Endothelial cell of umbilical vein (primary cell): ENCODE measurements at regions of chr3 and their contacts with region 1.

Region 1: DNA sequence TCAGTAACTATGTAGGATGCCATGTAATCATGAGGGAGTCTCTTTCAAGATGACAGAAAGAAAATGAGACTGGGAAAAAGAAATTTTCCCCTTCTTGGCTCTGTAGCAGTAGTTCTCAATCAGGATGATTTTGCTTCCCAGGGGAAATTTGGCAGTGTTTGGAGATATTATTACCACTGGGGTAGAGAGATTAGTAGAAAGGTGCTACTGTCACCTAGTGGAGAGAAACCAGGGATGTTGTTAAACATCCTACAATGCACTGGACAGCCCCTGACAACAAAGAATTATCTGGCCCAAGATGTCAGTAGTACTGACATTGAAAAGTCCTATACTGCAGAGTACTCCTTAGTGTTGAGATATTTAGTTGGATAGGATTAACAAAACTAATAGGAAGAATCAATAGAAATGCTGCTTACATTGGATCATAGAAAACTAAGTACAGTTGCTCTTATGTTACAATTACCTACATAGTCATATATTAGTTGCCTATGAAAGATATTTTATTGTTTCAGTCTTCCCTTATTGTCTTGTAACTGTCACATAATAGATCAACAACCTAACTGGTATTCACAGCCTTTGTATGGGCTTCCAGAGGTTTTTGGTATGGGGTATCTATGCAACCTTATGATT is 433.3 kb downstream of the RAP2B start:
- DNase-seq: peak; percentile 66
- H3K4me3 ChIP-seq: no peak overlapping the region
- H3K27ac ChIP-seq: no peak overlapping the region
- H3K4me1 ChIP-seq: peaks cover 15% of the 10 kb centered on the region
- H3K27me3 ChIP-seq: no peaks in the 10 kb centered on the region
- CTCF ChIP-seq: peak; percentile 35 to 62
- POLR2A ChIP-seq: no peak

Region 2: GRCh38 chr3:153291056-153291685 is 304.1 kb before region 1 on chr3:
- CTCF ChIA-PET with region 1: interaction called, 4 read pairs
- POLR2A ChIA-PET with region 1: no interaction called
- dilution Hi-C with region 1: no loop called
- intact Hi-C with region 1: loop called (anchors 10 kb)
- DNase-seq: peak; percentile 27
- H3K4me3 ChIP-seq: no peak overlapping the region
- H3K27ac ChIP-seq: no peak overlapping the region
- H3K4me1 ChIP-seq: no peaks in the 10 kb centered on the region
- H3K27me3 ChIP-seq: no peaks in the 10 kb centered on the region
- CTCF ChIP-seq: peak; percentile 17 to 25
- POLR2A ChIP-seq: no peak

Region 3: GRCh38 chr3:153679714-153680113 is 84.4 kb after region 1 on chr3:
- CTCF ChIA-PET with region 1: no interaction called
- POLR2A ChIA-PET with region 1: no interaction called
- dilution Hi-C with region 1: no loop called
- intact Hi-C with region 1: no loop called
- DNase-seq: no peak
- H3K4me3 ChIP-seq: no peak overlapping the region
- H3K27ac ChIP-seq: no peak overlapping the region
- H3K4me1 ChIP-seq: no peaks in the 10 kb centered on the region
- H3K27me3 ChIP-seq: no peaks in the 10 kb centered on the region
- CTCF ChIP-seq: no peak
- POLR2A ChIP-seq: no peak

Region 4: GRCh38 chr3:153752405-153753027 is 157.2 kb after region 1 on chr3:
- CTCF ChIA-PET with region 1: no interaction called
- POLR2A ChIA-PET with region 1: no interaction called
- dilution Hi-C with region 1: no loop called
- intact Hi-C with region 1: no loop called
- DNase-seq: no peak
- H3K4me3 ChIP-seq: no peak overlapping the region
- H3K27ac ChIP-seq: no peak overlapping the region
- H3K4me1 ChIP-seq: no peaks in the 10 kb centered on the region
- H3K27me3 ChIP-seq: no peaks in the 10 kb centered on the region
- CTCF ChIP-seq: no peak
- POLR2A ChIP-seq: no peak